ENCODE measurements at regions of chr10 and their contacts with region 1.

Region 1: GRCh38 chr10:28663576-28664313 is 13.6 kb upstream of the BAMBI start:
- DNase-seq: no peak
- ATAC-seq: peak; percentile 92

Region 2: GRCh38 chr10:27771231-27771630 is 892.5 kb before region 1 on chr10:
- intact Hi-C with region 1: no loop called
- DNase-seq: no peak
- ATAC-seq: no peak

Region 3: GRCh38 chr10:28503114-28503513 is 160.6 kb before region 1 on chr10:
- intact Hi-C with region 1: no loop called
- DNase-seq: no peak
- ATAC-seq: peak; percentile 62

Region 4: DNA sequence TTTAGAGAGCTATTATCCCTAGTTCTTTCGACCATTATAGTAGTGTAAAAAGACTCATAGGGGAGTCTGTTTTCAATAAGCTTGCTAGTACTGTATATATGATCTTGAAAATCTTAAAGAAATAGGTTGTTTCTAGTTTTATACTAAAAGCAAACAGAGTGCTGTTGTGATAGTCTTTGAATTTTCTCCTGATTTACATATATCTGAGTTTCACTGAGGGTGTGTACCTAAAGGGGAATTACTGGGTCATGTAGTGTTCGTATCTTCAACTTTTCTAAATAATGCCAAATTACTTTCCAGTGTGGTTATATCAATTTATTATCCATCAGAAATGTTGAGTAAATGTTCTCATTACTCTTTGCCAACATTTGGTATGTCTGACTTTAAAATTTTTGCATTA is 57.2 kb before region 1 on chr10:
- intact Hi-C with region 1: no loop called
- DNase-seq: no peak
- ATAC-seq: no peak

Region 5: DNA sequence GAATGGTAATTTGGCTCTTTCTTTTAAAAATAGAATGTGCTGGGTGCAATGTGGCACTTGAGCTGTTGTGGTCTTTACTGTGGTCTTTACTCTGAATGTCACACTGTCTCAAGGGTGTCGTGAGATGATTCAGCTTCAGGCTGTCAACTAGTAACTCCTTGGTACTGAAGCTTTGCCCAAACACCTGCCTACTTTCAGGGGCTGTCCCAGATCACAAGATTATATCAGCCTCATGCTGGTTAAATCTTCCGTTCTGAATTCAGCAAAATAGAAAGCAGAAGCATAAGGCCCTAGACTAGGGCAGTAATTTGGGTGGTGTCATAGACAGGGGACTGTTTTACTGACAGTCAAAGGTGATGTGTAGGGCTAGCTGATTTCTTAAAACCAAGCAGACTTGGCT is 124.5 kb after region 1 on chr10:
- intact Hi-C with region 1: no loop called
- DNase-seq: no peak
- ATAC-seq: no peak

Region 6: DNA sequence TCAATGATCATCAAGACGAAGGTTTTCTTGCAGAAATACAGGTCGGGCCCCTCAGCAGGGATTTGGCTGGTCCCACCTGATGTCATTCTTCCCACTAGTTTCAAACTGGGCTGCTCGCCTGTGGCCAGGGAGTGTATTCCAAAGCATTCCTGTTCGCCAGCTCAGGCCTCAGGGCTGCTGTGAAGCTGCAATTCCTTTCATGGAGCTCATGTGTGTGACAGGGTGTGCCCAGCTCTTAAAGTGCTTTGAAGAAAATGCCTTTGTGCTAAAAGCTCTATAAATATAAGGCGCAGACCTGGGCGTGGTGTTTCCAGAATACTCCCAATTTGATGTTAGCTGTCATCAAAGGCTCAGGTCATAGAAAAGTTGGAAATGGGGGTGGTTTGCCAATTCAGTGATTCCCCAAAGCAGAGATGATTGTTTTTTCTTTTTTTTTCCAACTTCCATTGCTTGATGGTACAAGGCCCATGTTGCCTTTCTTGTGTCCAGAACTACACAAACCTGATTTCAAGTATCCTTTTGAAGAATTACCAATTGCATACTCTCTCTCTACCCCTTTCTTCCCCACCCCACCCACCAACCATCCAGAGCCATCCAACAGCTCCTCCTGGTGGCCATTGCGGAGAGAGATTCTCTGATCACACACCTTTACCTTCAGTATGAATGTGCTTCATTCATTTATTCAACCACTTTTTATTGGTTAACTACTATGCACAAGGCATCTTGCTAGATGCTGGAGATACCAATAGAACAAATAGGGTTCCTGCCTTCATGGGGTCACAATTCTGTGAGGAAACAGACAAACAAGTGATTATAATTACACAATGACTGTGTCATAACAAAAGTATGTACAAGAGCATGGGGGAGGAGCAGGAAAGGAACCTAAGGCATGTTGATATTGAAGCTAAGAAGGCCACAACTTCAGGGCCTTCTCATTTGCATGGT is 327.9 kb after region 1 on chr10:
- intact Hi-C with region 1: loop called (anchors 2 kb)
- DNase-seq: no peak
- ATAC-seq: peak; percentile 80

Region 7: DNA sequence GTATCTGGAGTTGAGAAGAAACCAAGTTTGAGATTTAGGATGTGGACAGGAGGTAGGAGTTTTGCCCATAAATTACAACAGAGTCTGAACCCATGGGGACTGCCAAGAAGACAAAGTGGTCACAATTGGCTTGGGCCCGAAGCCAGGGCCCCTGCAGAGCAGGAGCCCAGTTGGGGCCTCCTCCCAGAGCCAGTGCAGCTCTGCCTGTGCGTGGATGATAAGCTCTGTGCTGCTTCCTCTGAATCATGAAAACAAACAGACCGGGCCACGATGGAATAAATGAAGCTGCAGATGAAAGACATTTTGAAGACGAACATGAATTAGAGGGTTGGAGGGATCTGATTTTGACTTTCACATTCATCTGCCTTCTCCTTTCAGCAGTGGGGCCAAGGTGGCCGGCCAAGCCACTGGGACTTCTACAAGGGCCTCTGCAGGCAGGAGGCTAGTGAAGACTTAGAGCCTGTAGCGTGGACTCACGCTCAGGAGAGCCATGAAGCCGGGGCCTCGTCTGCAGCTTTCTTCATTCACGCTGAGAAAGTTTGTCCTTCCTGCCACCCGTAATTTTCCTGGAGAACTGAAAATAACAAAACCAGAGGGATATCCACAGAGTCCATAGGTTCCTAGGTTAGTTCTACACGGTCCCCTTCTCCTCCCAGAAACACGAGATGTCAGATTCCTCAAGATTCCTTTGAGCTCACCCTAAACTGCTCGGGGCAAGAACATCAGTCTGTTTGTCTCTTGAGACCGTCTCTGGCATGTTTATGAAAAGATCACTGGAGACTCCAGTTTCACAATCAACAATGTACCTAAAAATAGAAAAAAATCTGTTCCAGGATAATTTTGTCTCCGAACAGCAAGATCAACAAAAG is 468.4 kb after region 1 on chr10:
- intact Hi-C with region 1: loop called (anchors 5 kb)
- DNase-seq: no peak
- ATAC-seq: peak; percentile 58

Measured in Right ventricle myocardium inferior (tissue), 1 donor.